ENCODE measurements at regions of chr4 and their contacts with region 1.

Region 1: GRCh38 chr4:83535520-83536361 is at the start of gene GPAT3:
- DNase-seq: peak; percentile 90
- ATAC-seq: peak; percentile 91
- total RNA-seq, gene GPAT3: 39.6 TPM

Region 2: DNA sequence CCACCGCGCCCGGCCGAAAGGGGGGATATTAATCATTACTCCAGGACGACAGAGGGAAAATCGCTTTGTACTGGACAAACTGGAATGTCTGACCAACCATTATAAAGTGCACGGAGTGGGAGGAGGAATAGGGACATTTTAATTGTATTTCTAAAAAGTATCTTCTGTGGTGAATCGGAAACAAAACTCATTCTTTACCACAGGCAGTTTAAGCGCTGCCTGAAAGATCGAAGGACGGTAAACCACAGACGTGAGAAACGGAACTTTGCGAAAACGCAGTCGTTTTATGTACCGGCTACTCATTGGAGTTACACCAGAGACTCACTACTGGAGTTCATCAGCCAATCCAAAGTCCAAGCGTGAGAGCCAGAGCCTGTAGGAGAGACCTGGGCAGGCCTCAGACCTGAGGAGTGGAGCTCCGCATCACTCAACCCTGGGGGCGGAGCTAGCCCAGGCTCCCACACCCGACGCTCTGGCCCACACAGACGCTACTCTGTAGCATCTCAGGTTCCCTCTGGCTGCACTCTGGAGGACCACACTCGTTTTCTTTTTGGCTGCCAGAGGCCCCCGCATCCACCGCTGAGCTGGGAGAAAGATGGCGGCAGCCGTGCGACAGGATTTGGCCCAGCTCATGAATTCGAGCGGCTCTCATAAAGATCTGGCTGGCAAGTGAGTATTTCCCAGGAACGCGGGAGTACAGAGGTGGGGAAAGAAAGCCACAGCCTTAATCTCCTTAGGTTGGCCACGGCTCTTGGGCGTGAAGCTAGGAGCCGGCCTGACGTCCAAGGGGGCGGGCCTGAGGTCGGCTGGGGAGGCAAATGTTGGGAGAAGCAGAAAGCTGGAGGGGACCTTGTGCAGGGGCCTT is 500.9 kb before region 1 on chr4 and contains the start of gene COPS4:
- intact Hi-C with region 1: no loop called
- DNase-seq: peak; percentile 97
- ATAC-seq: peak; percentile 100
- total RNA-seq, gene COPS4: 47.4 TPM

Region 3: DNA sequence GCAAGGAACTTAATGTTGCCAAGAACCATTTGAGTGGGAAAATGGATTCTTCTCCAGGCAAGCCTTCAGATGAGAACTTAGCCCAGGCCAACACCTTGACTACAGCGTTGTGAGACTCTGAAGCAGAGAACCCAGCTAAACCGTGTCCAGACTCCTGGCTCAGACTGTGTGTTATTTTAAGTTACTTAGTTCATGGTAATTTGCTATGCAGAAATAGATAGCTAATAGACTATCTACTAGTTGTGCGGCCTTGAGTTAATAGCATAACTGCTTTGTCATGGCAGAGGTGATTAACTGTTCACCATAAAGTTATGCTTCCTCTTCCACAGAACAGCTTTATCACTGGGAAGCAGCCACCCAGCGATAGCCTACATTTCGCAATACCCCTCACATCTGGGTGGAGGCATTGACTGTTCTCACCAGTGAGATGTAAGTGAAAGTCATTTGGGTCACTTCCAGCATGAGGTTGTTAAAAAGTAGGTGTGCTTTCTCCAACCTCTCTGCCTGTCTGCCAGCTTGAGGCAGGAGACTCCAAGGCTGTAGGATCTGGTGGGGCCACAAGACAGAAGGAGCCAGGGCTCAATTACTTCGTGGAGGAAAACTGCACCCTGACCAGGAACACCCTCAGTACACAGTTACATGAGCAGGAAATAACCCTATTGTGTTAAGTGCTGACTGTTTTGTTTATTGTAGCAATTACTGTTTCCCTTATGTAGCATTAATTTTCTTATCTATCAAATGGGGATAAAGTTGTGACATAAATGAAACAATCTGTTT is 94.4 kb after region 1 on chr4:
- intact Hi-C with region 1: loop called (anchors 5 kb)
- DNase-seq: peak; percentile 49
- ATAC-seq: peak; percentile 77

Measured in Right ventricle myocardium superior (tissue), 1 donor.